ENCODE measurements at regions of chr18 and their contacts with region 1.

Region 1: GRCh38 chr18:48800876-48801727 is 149.7 kb downstream of the SMAD7 start:
- DNase-seq: no peak
- H3K4me3 ChIP-seq: no peak overlapping the region
- H3K27ac ChIP-seq: no peak overlapping the region
- H3K4me1 ChIP-seq: peaks cover 18% of the 10 kb centered on the region
- CTCF ChIP-seq: no peak

Region 2: DNA sequence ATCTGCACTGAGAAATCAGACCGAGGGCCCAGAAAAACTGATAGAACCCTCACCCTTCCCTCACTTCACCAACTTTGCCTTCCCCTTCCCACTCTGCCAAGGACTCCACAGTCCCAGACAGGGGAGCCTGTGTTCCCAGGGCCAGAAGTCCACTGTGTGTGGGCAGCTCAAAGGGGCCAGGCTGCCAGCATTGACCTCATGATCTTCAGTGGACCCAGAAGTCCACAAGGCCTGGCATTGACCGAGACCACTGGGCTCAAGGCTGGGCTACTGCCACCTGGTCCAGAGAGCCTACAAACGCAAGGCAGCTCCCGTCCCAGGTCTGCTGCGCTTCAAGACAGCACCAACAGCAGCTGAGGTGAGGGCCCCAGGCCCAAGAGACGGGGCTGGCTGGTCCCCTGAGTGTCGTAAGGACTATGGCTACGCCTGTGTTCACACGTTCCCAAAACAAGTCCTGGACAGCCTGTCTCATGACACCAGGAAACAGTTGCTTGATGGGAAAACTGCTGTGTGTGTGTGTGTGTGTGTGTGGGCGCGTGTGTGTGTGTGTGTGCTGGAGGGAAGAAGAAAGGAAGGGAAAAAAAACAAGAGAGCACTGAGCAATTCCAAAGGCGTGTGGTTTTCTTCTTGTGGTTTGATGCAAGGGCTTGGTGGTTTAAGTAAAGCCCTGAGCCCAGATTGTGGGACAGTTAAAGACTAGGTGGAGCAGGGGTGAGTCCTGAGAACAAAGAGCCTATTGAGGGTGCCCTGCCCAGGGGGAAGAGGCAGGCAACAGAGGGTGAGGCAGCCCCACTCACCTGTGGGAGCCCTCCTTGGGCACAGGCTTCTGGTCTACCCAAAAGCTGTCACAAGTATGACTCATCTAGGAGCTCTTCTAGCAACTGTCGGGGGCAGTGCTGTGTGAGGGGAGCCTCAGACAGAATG is 345.3 kb before region 1 on chr18:
- CTCF ChIA-PET with region 1: no interaction called
- POLR2A ChIA-PET with region 1: no interaction called
- intact Hi-C with region 1: no loop called
- DNase-seq: no peak
- H3K4me3 ChIP-seq: no peak overlapping the region
- H3K27ac ChIP-seq: no peak overlapping the region
- H3K4me1 ChIP-seq: no peaks in the 10 kb centered on the region
- CTCF ChIP-seq: no peak

Region 3: DNA sequence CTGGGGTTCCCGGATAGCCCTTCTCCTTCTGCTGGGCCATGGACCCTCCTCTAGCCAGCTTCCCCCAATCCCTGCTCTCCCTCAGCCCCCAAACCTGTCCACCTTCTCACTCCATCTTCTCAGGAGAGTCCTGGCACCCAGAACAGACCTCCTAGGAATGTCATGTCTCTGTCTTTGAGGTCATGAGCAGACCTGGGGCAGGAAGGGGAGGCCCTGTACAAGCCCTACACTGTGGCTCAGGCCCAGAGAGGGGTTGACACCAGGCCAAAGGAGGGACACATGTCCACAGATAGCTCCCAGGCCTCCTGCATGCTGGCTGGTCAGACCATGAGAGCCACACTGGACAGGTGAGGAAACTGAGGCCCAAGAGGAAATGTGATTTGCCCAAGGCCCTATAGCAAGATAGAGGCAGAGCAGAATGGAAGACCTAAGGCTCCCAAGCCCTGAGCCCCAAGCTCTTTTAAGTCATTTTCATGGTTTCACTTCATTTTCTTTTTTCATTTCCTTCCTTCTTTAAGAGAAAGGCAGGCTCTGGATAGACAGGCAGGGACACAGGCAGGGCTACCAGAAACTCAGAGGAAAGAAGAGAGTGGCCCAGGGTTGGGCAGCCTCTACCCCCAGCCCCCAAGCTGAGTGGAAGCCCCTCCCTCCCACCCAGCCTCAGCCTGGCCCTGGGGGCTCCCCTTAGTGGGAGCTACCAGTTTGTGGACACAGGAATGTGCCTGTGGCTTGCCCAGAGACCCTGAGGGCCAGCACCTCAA is 10.0 kb before region 1 on chr18:
- CTCF ChIA-PET with region 1: interaction called, 10 read pairs
- POLR2A ChIA-PET with region 1: interaction called, 4 read pairs
- intact Hi-C with region 1: no loop called
- DNase-seq: peak; percentile 32
- H3K4me3 ChIP-seq: no peak overlapping the region
- H3K27ac ChIP-seq: no peak overlapping the region
- H3K4me1 ChIP-seq: peaks cover 40% of the 10 kb centered on the region
- CTCF ChIP-seq: no peak

Region 4: GRCh38 chr18:48817021-48817461 is 15.9 kb after region 1 on chr18:
- CTCF ChIA-PET with region 1: no interaction called
- POLR2A ChIA-PET with region 1: no interaction called
- intact Hi-C with region 1: no loop called
- DNase-seq: no peak
- H3K4me3 ChIP-seq: no peak overlapping the region
- H3K27ac ChIP-seq: no peak overlapping the region
- H3K4me1 ChIP-seq: peaks cover 46% of the 10 kb centered on the region
- CTCF ChIP-seq: no peak

Measured in OCI-LY7 (cell line).